GM13977 (cell line): ENCODE measurements at regions of chr17 and their contacts with region 1.

Region 1: DNA sequence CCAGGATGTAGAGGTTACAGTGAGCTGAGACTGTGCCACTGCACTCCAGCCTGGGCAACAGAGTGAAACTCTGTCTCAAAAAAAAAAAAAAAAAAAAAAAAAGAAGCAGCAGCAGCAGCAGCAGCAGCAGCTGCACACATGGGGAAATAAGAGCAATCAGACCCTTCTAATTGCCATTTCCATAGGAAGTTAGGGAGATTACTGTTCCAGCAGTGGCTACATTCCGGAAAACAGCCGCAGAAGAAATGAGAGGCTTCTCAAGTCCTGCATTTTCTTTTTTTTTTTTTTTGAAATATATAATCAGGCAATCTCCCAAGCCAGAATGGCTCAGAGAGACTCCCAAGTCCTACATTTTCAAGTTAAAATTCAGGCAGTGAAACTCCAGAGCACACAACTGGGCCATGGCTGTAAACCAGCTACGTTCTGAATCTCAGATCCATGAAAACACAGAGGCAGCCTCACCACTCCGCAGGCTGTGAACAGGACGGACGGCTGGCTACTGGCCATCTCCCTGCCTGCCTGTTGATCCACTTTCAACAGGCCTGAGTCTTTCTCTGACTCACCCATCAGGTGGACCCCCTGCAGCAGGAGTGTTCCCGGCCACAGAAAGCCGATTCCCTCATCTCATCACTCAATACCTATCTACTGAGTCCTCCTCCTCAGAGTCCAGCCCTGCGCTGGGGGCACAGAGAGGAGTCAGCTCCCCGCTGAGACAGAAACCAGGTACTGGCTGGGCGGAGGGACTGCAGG is 15.0 kb downstream of the TRPV1 start:
- DNase-seq: no peak
- CTCF ChIP-seq: no peak

Region 2: DNA sequence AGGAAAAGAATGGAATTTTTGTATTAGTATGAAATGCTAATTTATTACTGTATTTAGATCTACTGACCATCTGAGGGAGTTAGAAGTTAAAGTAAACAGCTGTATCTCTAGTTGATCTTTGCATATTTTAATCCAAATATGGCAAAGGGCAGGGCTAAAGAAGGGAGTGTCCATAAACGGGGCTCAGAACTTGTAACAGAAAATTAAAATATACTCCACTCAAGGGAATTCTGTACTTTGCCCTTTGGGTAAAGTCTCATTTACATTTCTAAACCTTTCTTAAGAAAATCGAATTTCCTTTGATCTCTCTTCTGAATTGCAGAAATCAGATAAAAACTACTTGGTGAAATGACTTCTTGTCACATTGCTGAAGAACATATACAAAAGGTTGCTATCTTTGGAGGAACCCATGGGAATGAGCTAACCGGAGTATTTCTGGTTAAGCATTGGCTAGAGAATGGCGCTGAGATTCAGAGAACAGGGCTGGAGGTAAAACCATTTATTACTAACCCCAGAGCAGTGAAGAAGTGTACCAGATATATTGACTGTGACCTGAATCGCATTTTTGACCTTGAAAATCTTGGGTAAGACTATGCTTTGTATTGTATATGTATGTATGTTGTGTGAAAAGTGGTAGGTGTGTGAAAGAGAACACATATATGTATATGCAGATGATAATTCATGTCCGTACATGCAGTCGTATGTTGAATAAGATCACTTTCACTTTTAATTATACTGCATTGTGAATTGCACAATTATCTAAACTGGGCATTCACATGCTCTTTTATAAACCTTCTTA is 118.2 kb before region 1 on chr17 and contains the start of gene ASPA:
- in situ Hi-C with region 1: loop called (anchors 25 kb)
- DNase-seq: no peak
- CTCF ChIP-seq: no peak